ENCODE measurements at regions of chr7 and their contacts with region 1.

Region 1: DNA sequence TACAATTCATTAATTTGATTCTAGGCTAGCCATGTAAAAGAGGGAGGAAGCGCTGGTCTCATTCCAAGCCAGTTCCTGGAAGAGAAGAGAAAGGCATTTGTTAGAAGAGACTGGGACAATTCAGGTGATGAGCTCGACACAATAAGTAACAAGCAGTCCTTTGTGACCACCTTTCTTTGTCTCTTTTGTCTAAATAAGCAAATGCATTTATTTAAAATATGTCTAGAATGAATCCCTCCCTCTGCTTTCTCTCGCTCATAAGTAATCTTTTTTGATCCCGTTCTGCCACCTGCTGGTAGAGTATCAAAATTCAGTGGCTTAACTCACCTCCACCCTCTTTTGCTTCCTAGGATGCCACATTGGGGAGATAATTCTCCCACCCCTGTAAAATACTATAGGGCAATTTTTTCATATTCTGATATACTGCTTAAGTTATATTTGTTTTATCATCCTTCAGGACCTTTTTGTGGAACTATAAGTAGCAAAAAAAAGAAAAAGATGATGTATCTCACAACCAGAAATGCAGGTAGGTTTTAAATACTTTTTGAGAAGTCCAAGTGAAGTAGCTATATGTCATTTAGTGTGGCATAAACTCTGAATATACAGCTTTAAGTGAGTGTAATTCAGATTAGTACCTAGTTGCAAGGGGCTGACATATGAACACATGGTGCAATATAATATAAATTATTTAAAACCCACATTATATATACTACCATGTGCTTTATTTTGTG is 91.5 kb downstream of the GSDME start:
- DNase-seq: peak in 1 of 2 experiments; percentile 65
- H3K4me3 ChIP-seq: no peak overlapping the region
- H3K4me3 Mint-ChIP-seq: no peak overlapping the region
- H3K27ac Mint-ChIP-seq: no peak overlapping the region
- H3K4me1 ChIP-seq: peaks cover 10% of the 10 kb centered on the region
- H3K4me1 Mint-ChIP-seq: peaks cover 5% of the 10 kb centered on the region
- H3K27me3 ChIP-seq: no peaks in the 10 kb centered on the region
- H3K27me3 Mint-ChIP-seq: no peaks in the 10 kb centered on the region
- CTCF ChIP-seq: peak; percentile 67 to 88

Region 2: DNA sequence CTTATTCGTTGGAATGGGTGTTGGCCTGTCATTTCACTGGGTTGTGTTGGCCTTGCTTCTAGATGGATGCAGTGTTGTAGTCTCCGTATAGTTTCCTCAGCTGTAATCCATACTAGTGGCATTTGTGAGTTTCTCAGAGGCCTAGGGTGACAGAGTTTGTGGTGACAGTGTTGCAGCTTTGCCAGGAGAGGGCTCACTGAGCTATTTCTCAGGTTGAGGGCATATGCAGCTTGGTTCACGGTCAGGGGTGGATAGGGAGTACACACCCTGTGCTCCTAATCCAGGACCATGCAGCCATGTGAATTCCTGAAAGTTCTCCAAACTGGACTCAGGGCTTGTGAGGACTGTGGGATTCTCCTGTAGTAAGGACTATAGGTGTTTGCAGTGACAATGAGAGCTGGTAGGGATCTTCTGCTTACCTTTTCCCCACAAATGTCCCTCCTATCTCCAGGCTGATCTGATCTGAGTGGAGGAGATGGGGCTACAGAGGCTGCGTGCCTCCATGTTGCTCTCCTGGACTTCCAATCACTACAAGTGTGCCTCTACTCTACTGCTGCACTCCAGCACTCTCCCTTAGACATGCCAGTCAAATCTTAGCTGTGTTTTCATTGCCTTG is 726.7 kb before region 1 on chr7:
- CTCF ChIA-PET with region 1: no interaction called
- POLR2A ChIA-PET with region 1: no interaction called
- intact Hi-C with region 1: loop called (anchors 10 kb)
- DNase-seq: peak; percentile 62 to 63
- H3K4me3 ChIP-seq: no peak overlapping the region
- H3K4me3 Mint-ChIP-seq: no peak overlapping the region
- H3K27ac Mint-ChIP-seq: no peak overlapping the region
- H3K4me1 ChIP-seq: no peaks in the 10 kb centered on the region
- H3K4me1 Mint-ChIP-seq: no peaks in the 10 kb centered on the region
- H3K27me3 ChIP-seq: no peaks in the 10 kb centered on the region
- H3K27me3 Mint-ChIP-seq: peaks cover 19% of the 10 kb centered on the region
- CTCF ChIP-seq: peak; percentile 65 to 83

Region 3: DNA sequence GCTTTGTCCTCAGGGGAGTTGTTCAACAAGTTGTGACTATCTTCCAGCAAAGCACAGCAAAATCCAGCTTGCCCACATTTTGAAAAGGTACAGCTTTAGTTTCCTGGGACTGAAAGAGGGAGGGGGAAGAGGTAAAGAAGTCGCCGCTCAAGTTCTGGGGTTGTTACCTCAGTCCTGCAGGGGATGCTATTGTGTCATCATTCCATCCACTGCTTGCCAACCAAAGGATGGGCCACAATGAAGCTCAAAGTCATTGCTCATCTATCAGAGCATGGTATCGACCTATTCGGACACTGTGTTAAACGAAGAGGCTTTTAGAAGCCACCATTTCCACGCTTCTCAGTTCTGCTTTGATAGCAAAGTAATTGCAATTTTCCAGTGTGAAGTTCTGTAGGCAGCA is 347.4 kb before region 1 on chr7:
- CTCF ChIA-PET with region 1: no interaction called
- POLR2A ChIA-PET with region 1: no interaction called
- intact Hi-C with region 1: loop called (anchors 1 kb)
- DNase-seq: peak; percentile 41 to 45
- H3K4me3 ChIP-seq: no peak overlapping the region
- H3K4me3 Mint-ChIP-seq: no peak overlapping the region
- H3K27ac Mint-ChIP-seq: no peak overlapping the region
- H3K4me1 ChIP-seq: no peaks in the 10 kb centered on the region
- H3K4me1 Mint-ChIP-seq: no peaks in the 10 kb centered on the region
- H3K27me3 ChIP-seq: no peaks in the 10 kb centered on the region
- H3K27me3 Mint-ChIP-seq: peaks cover 24% of the 10 kb centered on the region
- CTCF ChIP-seq: peak; percentile 40 to 77

Region 4: DNA sequence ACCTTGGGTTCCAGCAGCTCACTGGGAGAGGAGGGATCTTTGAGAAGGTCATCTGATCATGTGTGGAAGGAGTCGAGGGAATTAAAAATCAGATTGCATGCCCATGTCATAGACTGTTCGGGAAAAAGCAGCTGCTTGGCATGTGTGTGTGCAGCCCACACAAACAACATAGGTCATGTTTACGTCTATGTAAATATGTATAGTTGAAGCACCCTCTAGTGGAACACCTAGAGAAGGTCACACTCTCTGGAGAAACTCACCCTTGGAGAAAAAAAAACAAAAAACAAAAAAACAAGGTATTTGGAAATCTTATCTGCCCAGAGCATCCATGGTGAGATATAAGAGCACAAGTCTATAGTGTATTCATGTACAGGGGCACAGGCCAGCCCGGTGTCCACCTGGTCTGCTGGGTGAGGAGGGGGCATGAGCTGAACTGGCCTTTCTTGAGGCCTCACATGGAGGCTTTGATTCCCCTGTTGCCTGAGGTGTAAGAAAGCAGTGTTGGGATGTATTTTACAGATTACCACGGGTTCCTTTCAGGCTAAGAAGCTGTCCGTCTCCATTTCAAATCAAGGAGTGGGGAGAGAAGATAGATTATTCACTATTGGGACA is 283.7 kb before region 1 on chr7:
- CTCF ChIA-PET with region 1: no interaction called
- POLR2A ChIA-PET with region 1: no interaction called
- intact Hi-C with region 1: no loop called
- DNase-seq: peak in 1 of 2 experiments; percentile 19
- H3K4me3 ChIP-seq: no peak overlapping the region
- H3K4me3 Mint-ChIP-seq: no peak overlapping the region
- H3K27ac Mint-ChIP-seq: no peak overlapping the region
- H3K4me1 ChIP-seq: no peaks in the 10 kb centered on the region
- H3K4me1 Mint-ChIP-seq: no peaks in the 10 kb centered on the region
- H3K27me3 ChIP-seq: no peaks in the 10 kb centered on the region
- H3K27me3 Mint-ChIP-seq: peaks cover 2% of the 10 kb centered on the region
- CTCF ChIP-seq: peak; percentile 60 to 65

Region 5: DNA sequence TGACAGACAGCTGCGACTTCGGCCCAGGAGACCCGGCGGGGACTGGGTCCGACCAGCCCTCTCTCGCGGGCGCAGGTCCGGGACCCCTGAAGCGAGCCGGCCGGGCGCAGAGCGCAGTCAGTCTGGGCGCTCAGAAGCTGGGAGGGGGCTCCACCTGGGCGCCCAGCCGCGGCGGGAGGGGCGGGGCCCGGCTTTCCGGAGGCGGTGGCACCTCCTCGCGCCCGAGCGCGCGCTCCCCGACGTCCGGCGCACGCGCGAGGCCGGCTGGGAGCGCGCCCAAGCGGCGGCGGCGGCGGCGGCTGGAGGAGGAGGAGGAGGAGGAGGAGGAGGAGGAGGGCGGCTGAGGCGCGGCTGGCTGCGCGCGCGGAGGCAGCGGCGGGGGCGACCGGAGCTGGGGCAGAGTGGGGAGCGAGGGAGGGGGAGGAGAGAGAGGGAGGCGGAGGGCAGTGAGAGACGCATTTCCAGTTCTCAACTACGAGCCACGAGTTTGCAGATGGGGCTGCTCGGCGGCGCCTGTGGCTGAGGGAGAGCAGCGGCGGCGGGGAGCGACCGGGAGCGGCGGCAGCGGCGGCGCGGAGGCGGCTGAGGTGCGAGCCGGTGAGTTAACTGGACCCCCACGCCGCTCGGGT is 92.6 kb before region 1 on chr7 and contains the start of gene PALS2:
- CTCF ChIA-PET with region 1: no interaction called
- POLR2A ChIA-PET with region 1: no interaction called
- intact Hi-C with region 1: loop called (anchors 1 kb)
- DNase-seq: peak; percentile 75 to 81
- H3K4me3 ChIP-seq: peak within 1 kb of the TSS; percentile 81
- H3K4me3 Mint-ChIP-seq: peak within 1 kb of the TSS; percentile 98
- H3K27ac Mint-ChIP-seq: peak within 1 kb of the TSS; percentile 69
- H3K4me1 ChIP-seq: peaks cover 31% of the 10 kb centered on the region
- H3K4me1 Mint-ChIP-seq: peaks cover 37% of the 10 kb centered on the region
- H3K27me3 ChIP-seq: no peaks in the 10 kb centered on the region
- H3K27me3 Mint-ChIP-seq: peaks cover 11% of the 10 kb centered on the region
- CTCF ChIP-seq: no peak
- total RNA-seq, gene PALS2: 37.2 and 38.5 TPM in 2 replicates

Region 6: DNA sequence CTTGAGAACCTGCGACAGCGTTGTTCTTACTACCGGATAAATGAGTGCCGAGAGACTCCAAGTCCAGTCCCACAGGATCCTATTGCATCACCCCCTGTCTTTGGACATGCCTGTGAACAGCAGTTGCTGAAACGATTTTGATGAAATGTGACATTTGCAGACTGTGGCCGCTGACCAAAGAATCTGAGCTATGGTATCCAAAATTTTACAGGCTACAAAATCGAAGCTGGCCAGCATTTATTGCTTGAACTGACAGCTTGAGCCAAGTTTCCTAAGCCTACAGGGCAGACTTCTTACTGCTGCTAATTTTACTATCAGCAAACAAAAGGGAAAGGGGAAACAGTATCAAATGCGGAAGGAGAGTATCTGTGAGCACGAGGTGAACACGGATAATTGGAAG is 574.6 kb after region 1 on chr7:
- CTCF ChIA-PET with region 1: no interaction called
- POLR2A ChIA-PET with region 1: no interaction called
- intact Hi-C with region 1: no loop called
- DNase-seq: no peak
- H3K4me3 ChIP-seq: no peak overlapping the region
- H3K4me3 Mint-ChIP-seq: no peak overlapping the region
- H3K27ac Mint-ChIP-seq: no peak overlapping the region
- H3K4me1 ChIP-seq: no peaks in the 10 kb centered on the region
- H3K4me1 Mint-ChIP-seq: no peaks in the 10 kb centered on the region
- H3K27me3 ChIP-seq: no peaks in the 10 kb centered on the region; the same call in 1 of the 2 replicates
- H3K27me3 Mint-ChIP-seq: peaks cover 29% of the 10 kb centered on the region
- CTCF ChIP-seq: no peak

Measured in Caco-2 (cell line).